GM12878 (cell line): ENCODE measurements at regions of chr12 and their contacts with region 1.

Region 1: GRCh38 chr12:31756977-31757420 is 28.2 kb upstream of the AMN1 start:
- DNase-seq: no peak
- ATAC-seq: peak; percentile 33
- H3K4me3 ChIP-seq: no peak overlapping the region
- H3K27ac ChIP-seq: no peak overlapping the region
- H3K4me1 ChIP-seq: peaks cover 9% of the 10 kb centered on the region
- H3K27me3 ChIP-seq: no peaks in the 10 kb centered on the region
- CTCF ChIP-seq: 0 out of 6 replicates have a peak, but pooled peaks of 1 of the 3 experiments have one; percentile 0
- EP300 ChIP-seq: no peak
- POLR2A ChIP-seq: no peak
- RAD21 ChIP-seq: no peak

Region 2: DNA sequence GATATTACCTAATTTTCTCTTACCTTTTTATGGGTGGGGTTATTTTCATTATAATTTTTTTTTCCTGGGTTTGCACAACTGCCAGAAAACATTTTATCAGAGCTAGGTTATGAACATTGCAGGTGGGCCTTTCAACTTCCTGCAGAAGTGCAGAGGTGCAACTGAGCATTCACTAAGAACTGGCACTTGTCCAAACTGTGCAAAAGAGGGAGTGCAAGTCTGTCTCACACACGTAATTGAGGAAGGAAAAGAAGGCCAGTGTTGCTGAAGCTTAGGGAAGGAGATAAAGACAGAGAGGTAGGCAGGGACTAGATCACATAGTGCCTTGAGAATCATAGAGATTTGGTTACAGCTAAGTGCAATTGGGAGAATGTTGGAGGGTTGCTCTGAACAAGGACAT is 14.1 kb before region 1 on chr12:
- CTCF ChIA-PET with region 1: no interaction called
- POLR2A ChIA-PET with region 1: interaction called, 6 read pairs
- RAD21 ChIA-PET with region 1: interaction called, 4 read pairs
- SMC1A ChIA-PET with region 1: interaction called, 15 read pairs
- in situ Hi-C with region 1: no loop called
- intact Hi-C with region 1: no loop called
- DNase-seq: no peak
- ATAC-seq: no peak; the same call in 2 of the 3 replicates
- H3K4me3 ChIP-seq: no peak overlapping the region
- H3K27ac ChIP-seq: no peak overlapping the region
- H3K4me1 ChIP-seq: peaks cover 27% of the 10 kb centered on the region
- H3K27me3 ChIP-seq: no peaks in the 10 kb centered on the region
- CTCF ChIP-seq: no peak
- EP300 ChIP-seq: no peak
- POLR2A ChIP-seq: no peak
- RAD21 ChIP-seq: no peak

Region 3: DNA sequence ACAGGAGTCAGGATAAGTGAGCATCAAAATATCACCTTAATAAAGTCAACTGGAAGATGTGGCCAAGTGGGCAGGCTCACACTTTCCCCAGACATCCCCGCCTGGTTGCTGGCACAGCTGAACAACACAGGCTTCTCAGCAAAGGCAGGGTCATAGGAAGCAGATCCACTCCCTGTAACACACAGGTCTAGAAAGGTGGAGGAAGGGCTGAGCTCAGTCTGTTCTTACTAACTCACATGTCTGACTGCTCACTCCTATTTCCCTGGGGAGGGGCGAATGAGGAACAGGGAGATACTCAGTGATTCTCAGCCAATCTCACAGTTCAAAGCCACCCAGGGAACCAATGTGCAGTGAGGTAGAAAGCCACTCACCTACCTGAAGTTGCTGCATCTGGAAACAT is 16.9 kb after region 1 on chr12:
- CTCF ChIA-PET with region 1: interaction called, 3 read pairs
- POLR2A ChIA-PET with region 1: interaction called, 13 read pairs
- RAD21 ChIA-PET with region 1: interaction called, 16 read pairs
- SMC1A ChIA-PET with region 1: interaction called, 25 read pairs
- in situ Hi-C with region 1: no loop called
- intact Hi-C with region 1: no loop called
- DNase-seq: peak; percentile 57
- ATAC-seq: peak; percentile 92
- H3K4me3 ChIP-seq: no peak overlapping the region
- H3K27ac ChIP-seq: peak overlapping the region; percentile 1; the same call in 1 of the 2 replicates
- H3K4me1 ChIP-seq: peaks cover 14% of the 10 kb centered on the region
- H3K27me3 ChIP-seq: no peaks in the 10 kb centered on the region
- CTCF ChIP-seq: no peak
- EP300 ChIP-seq: no peak
- POLR2A ChIP-seq: no peak
- RAD21 ChIP-seq: no peak

Region 4: DNA sequence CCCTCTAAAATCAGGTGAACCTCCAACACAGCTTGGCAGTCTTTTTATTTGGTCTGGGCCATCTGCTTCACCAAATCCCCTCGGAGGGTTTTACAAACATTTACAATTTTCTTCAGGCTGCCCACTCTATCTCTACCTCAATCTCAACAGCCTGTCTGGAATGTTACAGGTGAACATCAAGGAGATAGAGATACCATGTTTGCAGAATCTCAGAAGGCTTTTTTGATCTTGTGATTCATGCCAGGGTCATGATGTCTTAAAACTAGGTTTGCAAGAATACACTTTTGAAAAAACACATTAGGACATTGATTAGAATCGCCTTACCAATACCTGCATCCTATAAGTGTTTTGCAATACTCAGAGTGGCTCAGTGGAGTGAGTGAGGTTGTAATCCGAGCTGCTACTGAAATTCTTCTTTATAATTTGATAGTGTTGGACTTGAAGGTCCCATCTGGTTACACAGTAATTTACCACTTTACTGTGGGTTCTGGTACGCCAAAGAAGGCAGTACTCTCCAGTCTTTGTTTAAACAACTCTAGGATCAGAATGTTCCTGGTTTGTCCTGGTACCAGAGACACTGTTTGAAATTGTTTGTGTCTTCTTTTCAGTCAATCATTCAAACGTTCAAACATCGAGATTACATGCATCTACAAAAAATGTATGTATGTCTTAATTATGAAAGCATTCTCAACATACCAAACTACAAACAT is 22.9 kb after region 1 on chr12:
- CTCF ChIA-PET with region 1: interaction called, 3 read pairs
- POLR2A ChIA-PET with region 1: interaction called, 13 read pairs
- RAD21 ChIA-PET with region 1: interaction called, 16 read pairs
- SMC1A ChIA-PET with region 1: interaction called, 25 read pairs
- in situ Hi-C with region 1: no loop called
- intact Hi-C with region 1: no loop called
- DNase-seq: no peak
- ATAC-seq: no peak
- H3K4me3 ChIP-seq: no peak overlapping the region
- H3K27ac ChIP-seq: no peak overlapping the region
- H3K4me1 ChIP-seq: no peaks in the 10 kb centered on the region
- H3K27me3 ChIP-seq: no peaks in the 10 kb centered on the region
- CTCF ChIP-seq: no peak
- EP300 ChIP-seq: no peak
- POLR2A ChIP-seq: no peak
- RAD21 ChIP-seq: no peak

Region 5: GRCh38 chr12:31834150-31834549 is 77.2 kb after region 1 on chr12:
- CTCF ChIA-PET with region 1: interaction called, 4 read pairs
- POLR2A ChIA-PET with region 1: interaction called, 11 read pairs
- RAD21 ChIA-PET with region 1: no interaction called
- SMC1A ChIA-PET with region 1: no interaction called
- in situ Hi-C with region 1: no loop called
- intact Hi-C with region 1: no loop called
- DNase-seq: no peak
- ATAC-seq: no peak
- H3K4me3 ChIP-seq: no peak overlapping the region
- H3K27ac ChIP-seq: no peak overlapping the region
- H3K4me1 ChIP-seq: peaks cover 21% of the 10 kb centered on the region
- H3K27me3 ChIP-seq: no peaks in the 10 kb centered on the region
- CTCF ChIP-seq: no peak
- EP300 ChIP-seq: no peak
- POLR2A ChIP-seq: no peak
- RAD21 ChIP-seq: no peak